ENCODE measurements at regions of chr21 and their contacts with region 1.

Region 1: GRCh38 chr21:31173881-31174555 is 135.7 kb upstream of the KRTAP19-8 start:
- DNase-seq: no peak
- H3K4me3 ChIP-seq: no peak overlapping the region
- H3K27ac ChIP-seq: peak overlapping the region; percentile 2 to 45 (median 22)
- H3K4me1 ChIP-seq: peaks cover 0 to 20% (median 0%) of the 10 kb centered on the region in 4 donors
- H3K27me3 ChIP-seq: no peaks in the 10 kb centered on the region
- CTCF ChIP-seq: no peak
- EP300 ChIP-seq: no peak
- POLR2A ChIP-seq: no peak

Region 2: GRCh38 chr21:31117128-31117916 is 56.7 kb before region 1 on chr21:
- in situ Hi-C with region 1: loop called in 1 of 4 experiments (anchors 10 kb)
- intact Hi-C with region 1: no loop called
- DNase-seq: no peak
- H3K4me3 ChIP-seq: no peak overlapping the region
- H3K27ac ChIP-seq: no peak overlapping the region
- H3K4me1 ChIP-seq: no peaks in the 10 kb centered on the region
- H3K27me3 ChIP-seq: no peaks in the 10 kb centered on the region
- CTCF ChIP-seq: no peak
- EP300 ChIP-seq: no peak
- POLR2A ChIP-seq: no peak

Region 3: DNA sequence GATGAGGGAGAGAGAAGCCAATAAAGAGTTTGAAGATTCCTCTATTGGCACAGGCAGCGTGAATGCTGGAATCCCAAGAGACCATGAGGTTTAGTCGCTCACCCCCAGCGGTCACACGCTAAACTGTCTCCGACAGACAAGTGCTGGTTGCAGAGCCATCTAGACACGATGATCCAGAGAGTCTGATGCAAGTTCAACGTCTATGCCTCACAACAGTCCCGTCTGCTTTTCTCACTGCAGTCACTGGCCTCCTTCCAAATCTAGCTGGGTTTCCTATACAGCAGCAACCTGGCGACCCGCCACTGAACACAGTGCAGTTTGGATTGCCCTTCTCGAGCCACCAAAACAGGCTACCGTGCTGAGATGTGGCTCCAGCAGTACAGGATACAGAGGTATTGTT is 37.1 kb before region 1 on chr21:
- in situ Hi-C with region 1: no loop called
- intact Hi-C with region 1: no loop called
- DNase-seq: no peak
- H3K4me3 ChIP-seq: no peak overlapping the region
- H3K27ac ChIP-seq: no peak overlapping the region
- H3K4me1 ChIP-seq: no peaks in the 10 kb centered on the region
- H3K27me3 ChIP-seq: no peaks in the 10 kb centered on the region
- CTCF ChIP-seq: no peak
- EP300 ChIP-seq: no peak
- POLR2A ChIP-seq: no peak